ENCODE measurements at regions of chr1 and their contacts with region 1.

Region 1: GRCh38 chr1:174726167-174726879 is 273.4 kb upstream of the CACYBP start:
- DNase-seq: no peak
- H3K4me3 Mint-ChIP-seq: no peak overlapping the region
- H3K27ac Mint-ChIP-seq: no peak overlapping the region
- H3K4me1 Mint-ChIP-seq: no peaks in the 10 kb centered on the region
- H3K27me3 Mint-ChIP-seq: no peaks in the 10 kb centered on the region

Region 2: DNA sequence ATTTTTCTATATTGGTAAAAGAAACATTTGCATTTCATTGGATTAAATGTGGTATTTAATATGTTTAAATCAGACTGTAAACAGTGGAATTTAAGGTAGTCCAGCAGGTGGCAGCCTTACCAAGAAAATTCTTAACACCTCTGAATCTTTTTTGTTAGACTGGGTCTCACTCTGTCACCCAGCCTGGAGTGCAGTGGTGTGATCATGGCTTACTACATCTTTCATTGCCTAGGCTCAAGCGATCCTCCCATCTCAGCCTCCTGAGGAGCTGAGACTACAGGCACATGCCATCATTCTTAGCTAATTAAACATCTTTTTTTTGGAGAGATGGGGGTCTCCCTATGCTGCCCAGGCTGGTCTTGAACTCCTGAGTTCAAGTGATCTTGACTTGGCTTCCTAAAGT is 468.2 kb before region 1 on chr1:
- intact Hi-C with region 1: loop called (anchors 5 kb)
- DNase-seq: peak; percentile 81
- H3K4me3 Mint-ChIP-seq: no peak overlapping the region
- H3K27ac Mint-ChIP-seq: no peak overlapping the region
- H3K4me1 Mint-ChIP-seq: no peaks in the 10 kb centered on the region
- H3K27me3 Mint-ChIP-seq: no peaks in the 10 kb centered on the region

Region 3: GRCh38 chr1:174713796-174714195 is 12.5 kb before region 1 on chr1:
- intact Hi-C with region 1: loop called (anchors 1 kb)
- DNase-seq: no peak
- H3K4me3 Mint-ChIP-seq: no peak overlapping the region
- H3K27ac Mint-ChIP-seq: no peak overlapping the region
- H3K4me1 Mint-ChIP-seq: no peaks in the 10 kb centered on the region
- H3K27me3 Mint-ChIP-seq: no peaks in the 10 kb centered on the region

Measured in activated CD4-positive, alpha-beta T cell treated with anti-CD3 and anti-CD28 coated beads, Interleukin-2, amount 10 ng/mL, durations not matched to agents 24 days and 14 days (primary cell).